GM13976 (cell line): ENCODE measurements at regions of chr18 and their contacts with region 1.

Region 1: GRCh38 chr18:50009773-50010335 is 185.1 kb downstream of the MYO5B start:
- DNase-seq: peak; percentile 47
- CTCF ChIP-seq: peak; percentile 42

Region 2: DNA sequence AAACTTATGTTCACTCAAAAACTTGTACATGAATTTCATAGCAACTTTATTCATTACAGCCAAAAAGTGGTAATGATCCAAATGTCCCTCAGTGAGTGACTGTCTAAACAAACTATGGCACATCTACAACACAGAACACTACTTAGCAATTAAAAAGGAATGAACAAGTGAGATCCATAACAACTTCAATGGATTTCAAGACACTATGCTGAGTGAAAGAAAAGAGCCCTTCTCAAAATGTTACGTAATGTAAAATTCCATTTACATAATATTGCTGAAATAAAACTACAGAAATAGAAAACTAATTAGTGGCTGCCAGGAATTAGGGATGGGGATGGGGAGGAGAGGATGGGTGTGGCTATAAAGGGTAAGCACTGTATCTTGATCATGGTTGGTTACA is 603.0 kb before region 1 on chr18:
- in situ Hi-C with region 1: no loop called
- DNase-seq: no peak
- CTCF ChIP-seq: no peak

Region 3: GRCh38 chr18:50374753-50375391 is 365.0 kb after region 1 on chr18 and contains the start of gene SKA1:
- in situ Hi-C with region 1: loop called (anchors 25 kb)
- DNase-seq: peak; percentile 99
- CTCF ChIP-seq: no peak